Gastrocnemius medialis (tissue), 4 donors: ENCODE measurements at regions of chr2 and their contacts with region 1.

Region 1: DNA sequence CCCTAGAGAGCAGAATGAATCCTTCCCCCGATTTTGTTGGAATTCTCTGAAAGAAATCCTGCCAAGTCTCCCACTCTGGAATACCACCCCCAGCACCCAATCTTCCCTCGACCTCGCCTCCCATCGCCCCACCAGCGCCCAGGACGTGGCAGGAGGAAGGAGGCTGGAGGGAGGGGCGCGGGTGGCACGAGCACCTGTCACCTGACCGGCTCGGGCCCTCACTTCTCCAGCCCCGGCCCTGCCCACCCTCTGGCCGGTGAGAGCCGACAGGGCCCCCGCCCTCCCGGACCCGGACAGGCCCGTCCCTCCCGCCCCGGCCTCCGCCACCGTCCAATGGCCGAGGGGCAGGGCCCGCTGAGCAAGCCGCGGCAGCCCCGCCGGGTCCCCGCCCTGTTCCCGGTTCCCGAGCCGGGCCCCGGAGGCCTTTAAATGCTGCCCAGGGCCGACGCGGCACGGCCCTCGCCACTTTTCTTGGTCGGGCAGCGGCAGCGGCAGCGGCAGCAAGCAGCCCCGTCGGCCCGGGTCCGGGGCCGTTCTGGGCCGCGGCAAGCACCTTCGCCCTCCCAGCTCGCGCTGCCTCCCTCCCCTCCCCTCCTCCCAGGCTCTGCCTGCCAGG is at the start of gene LGALSL:
- DNase-seq: peak; percentile 60 to 76
- ATAC-seq: peak; percentile 70 to 72
- H3K4me3 ChIP-seq: peak within 1 kb of the TSS; percentile 72 to 93 (median 82)
- H3K27ac ChIP-seq: peak within 1 kb of the TSS; percentile 94 to 99 (median 96)
- H3K4me1 ChIP-seq: peaks cover 29 to 50% of the 10 kb centered on the region in 2 donors
- H3K27me3 ChIP-seq: no peaks in the 10 kb centered on the region
- CTCF ChIP-seq: no peak
- POLR2A ChIP-seq: peak; percentile 64 to 65
- total RNA-seq, gene LGALSL: 3.8 to 19.6 (median 6.5) TPM

Region 2: DNA sequence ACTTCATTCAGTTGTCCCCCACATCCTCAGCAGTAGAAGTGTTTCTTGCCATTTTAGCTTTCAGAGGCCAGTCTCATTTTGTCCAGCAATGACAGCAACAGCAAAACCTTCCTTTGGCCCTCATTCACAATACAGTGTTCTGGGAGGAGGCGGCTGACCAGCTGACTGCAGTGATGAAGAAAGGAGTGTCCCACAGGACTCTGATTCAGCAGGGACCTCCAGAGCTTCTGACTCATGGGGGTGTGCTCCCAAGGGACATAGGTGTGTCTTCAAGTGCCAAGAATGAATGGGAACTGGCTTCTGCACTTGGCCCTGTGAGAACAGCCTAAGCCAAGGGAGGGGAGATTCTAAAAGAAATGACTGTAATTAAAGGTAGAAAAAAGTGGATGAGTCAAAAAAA is 162.7 kb before region 1 on chr2:
- in situ Hi-C with region 1: no loop called
- intact Hi-C with region 1: no loop called
- DNase-seq: no peak
- ATAC-seq: no peak
- H3K4me3 ChIP-seq: no peak overlapping the region
- H3K27ac ChIP-seq: no peak overlapping the region
- H3K4me1 ChIP-seq: peaks cover 0 to 4% of the 10 kb centered on the region in 2 donors
- H3K27me3 ChIP-seq: no peaks in the 10 kb centered on the region
- CTCF ChIP-seq: no peak
- POLR2A ChIP-seq: no peak

Region 3: DNA sequence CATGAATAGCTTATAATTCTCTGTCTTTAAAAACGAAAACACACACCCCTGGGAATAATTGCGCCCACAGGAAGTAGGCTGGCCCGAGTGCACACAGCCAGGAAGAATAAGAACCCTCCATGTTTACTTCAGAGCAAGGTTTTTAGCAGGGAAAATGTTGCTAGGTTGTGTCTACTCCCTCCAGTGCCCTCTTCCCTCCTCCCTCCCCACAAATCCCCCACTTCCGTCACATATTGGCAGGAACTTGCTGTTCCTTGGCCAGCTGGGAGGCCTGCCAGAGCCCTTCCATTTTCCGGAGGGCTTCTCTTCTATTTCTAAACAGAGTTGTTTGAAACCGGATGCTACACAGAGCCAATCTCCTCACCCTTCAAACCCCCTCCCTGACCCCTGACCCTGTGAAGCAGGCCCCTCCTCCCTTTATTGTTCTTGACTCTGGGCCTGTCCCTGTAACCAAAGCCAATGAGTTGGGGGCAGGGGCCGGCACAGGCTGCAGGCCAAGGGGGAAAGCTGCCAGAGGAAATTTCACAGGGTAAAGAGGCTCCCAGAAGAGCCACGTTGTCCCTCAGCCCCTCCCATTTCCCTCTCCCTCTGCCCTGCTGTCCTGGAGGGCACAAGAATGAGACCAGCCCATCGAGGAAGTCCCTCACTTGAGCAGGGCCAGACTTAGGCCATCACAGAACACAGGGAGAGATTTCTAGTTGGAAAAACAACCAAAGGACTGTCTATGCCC is 49.7 kb before region 1 on chr2:
- in situ Hi-C with region 1: no loop called
- intact Hi-C with region 1: loop called (anchors 2 kb)
- DNase-seq: peak; percentile 56 to 73
- ATAC-seq: peak; percentile 71 to 72
- H3K4me3 ChIP-seq: peak overlapping the region in 3 of 4 donors; percentile 2 to 32 (median 29)
- H3K27ac ChIP-seq: peak overlapping the region; percentile 74 to 83 (median 80)
- H3K4me1 ChIP-seq: peaks cover 60 to 65% of the 10 kb centered on the region in 2 donors
- H3K27me3 ChIP-seq: no peaks in the 10 kb centered on the region
- CTCF ChIP-seq: no peak
- POLR2A ChIP-seq: no peak

Region 4: GRCh38 chr2:64419596-64420165 is 34.2 kb before region 1 on chr2:
- in situ Hi-C with region 1: no loop called
- intact Hi-C with region 1: loop called (anchors 2 kb)
- DNase-seq: no peak
- ATAC-seq: peak in 1 of 2 donors; percentile 13
- H3K4me3 ChIP-seq: no peak overlapping the region
- H3K27ac ChIP-seq: peak overlapping the region; percentile 69 to 83 (median 80)
- H3K4me1 ChIP-seq: peaks cover 38 to 43% of the 10 kb centered on the region in 2 donors
- H3K27me3 ChIP-seq: no peaks in the 10 kb centered on the region
- CTCF ChIP-seq: no peak
- POLR2A ChIP-seq: no peak